ENCODE measurements at regions of chr5 and their contacts with region 1.

Region 1: GRCh38 chr5:146426853-146427618 is 20.1 kb upstream of the TCERG1 start:
- DNase-seq: peak in 1 of 2 experiments; percentile 42
- H3K4me3 ChIP-seq: no peak overlapping the region
- H3K4me3 Mint-ChIP-seq: no peak overlapping the region
- H3K27ac Mint-ChIP-seq: no peak overlapping the region
- H3K4me1 ChIP-seq: no peaks in the 10 kb centered on the region
- H3K4me1 Mint-ChIP-seq: peaks cover 6% of the 10 kb centered on the region
- H3K27me3 ChIP-seq: no peaks in the 10 kb centered on the region
- H3K27me3 Mint-ChIP-seq: peaks cover 8% of the 10 kb centered on the region
- CTCF ChIP-seq: peak; percentile 46 to 58

Region 2: DNA sequence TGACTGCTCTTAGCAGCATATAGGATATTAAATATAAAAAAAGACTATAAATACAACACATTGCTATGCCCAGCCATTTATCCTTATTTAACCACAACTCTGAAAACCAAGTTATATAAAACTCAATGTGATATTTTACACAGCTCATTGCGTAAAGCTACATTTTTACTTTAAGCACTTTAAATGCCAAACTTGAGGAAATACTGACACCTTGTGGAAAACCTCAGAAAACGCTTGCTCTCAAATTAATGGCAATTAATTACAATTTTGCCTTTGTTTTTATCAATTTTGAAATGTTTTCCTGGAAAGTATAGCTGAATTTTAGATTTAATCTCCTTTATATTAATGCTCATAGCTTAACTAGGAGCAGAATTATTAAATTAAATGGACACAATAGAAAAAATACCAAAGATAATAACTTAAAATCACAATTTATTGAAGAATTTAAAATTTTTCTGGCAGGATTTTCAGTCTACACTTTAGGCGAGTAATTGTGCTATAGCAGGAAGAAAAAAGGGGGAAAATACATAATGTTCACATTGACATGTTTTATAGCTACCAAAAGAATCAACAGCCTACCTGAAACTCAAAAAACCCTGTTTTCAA is 296.5 kb before region 1 on chr5:
- CTCF ChIA-PET with region 1: no interaction called
- POLR2A ChIA-PET with region 1: no interaction called
- intact Hi-C with region 1: loop called (anchors 10 kb)
- DNase-seq: peak in 1 of 2 experiments; percentile 12
- H3K4me3 ChIP-seq: no peak overlapping the region
- H3K4me3 Mint-ChIP-seq: no peak overlapping the region
- H3K27ac Mint-ChIP-seq: no peak overlapping the region
- H3K4me1 ChIP-seq: no peaks in the 10 kb centered on the region
- H3K4me1 Mint-ChIP-seq: no peaks in the 10 kb centered on the region
- H3K27me3 ChIP-seq: no peaks in the 10 kb centered on the region
- H3K27me3 Mint-ChIP-seq: no peaks in the 10 kb centered on the region
- CTCF ChIP-seq: peak; percentile 38 to 45

Region 3: DNA sequence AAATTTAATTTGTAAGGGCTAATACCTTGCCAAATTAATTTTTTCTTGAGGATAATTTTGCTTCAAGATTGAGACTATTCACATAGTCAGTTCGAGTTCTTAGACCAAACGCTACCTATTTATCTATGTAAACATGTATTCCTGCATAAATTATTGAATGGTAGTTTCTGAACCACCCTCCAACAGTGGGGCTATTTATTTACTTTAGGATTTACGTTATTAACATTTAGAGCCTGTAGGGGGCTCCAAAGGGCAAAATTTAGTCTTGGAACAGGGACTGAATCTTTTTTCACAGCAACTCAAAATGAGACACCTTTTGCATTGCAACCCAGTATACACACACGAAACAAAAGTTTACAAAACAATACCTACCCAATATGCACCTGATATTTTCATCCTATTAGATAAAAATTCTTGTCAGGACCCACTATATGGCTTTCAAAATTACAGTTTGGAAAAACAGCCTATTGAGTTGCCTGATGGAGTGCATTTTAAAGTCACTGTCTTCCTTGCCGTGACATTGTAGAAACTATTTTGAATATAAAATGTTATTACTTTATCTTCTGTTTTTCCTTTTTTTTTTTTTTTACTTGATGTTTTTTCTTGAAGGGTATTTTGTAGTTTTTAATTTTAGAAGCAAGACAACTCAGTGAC is 135.5 kb before region 1 on chr5:
- CTCF ChIA-PET with region 1: interaction called, 4 read pairs
- POLR2A ChIA-PET with region 1: no interaction called
- intact Hi-C with region 1: loop called (anchors 1 kb)
- DNase-seq: peak in 1 of 2 experiments; percentile 50
- H3K4me3 ChIP-seq: no peak overlapping the region
- H3K4me3 Mint-ChIP-seq: no peak overlapping the region
- H3K27ac Mint-ChIP-seq: no peak overlapping the region
- H3K4me1 ChIP-seq: no peaks in the 10 kb centered on the region
- H3K4me1 Mint-ChIP-seq: no peaks in the 10 kb centered on the region
- H3K27me3 ChIP-seq: no peaks in the 10 kb centered on the region
- H3K27me3 Mint-ChIP-seq: no peaks in the 10 kb centered on the region
- CTCF ChIP-seq: peak; percentile 69 to 72

Region 4: DNA sequence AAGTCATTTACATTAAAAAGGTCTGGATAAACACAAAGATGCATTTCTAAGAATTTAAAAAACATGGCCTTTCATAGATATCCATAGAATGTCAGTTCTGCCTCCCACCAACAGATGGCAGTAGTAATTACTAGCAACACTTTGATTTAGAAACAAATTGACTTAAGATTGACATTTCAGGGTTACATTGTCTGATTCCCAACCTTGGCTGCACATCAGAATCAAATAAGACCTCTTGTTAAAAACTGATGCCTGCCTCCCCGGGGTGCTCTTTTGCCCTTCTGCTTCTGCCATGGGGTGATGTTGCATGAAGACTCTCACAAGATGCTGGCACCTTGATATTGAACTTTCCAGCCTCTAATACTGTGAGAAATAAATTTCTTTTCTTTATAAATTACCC is 235.2 kb after region 1 on chr5:
- CTCF ChIA-PET with region 1: no interaction called
- POLR2A ChIA-PET with region 1: no interaction called
- intact Hi-C with region 1: no loop called
- DNase-seq: peak in 1 of 2 experiments; percentile 32
- H3K4me3 ChIP-seq: no peak overlapping the region
- H3K4me3 Mint-ChIP-seq: no peak overlapping the region
- H3K27ac Mint-ChIP-seq: no peak overlapping the region
- H3K4me1 ChIP-seq: no peaks in the 10 kb centered on the region
- H3K4me1 Mint-ChIP-seq: no peaks in the 10 kb centered on the region
- H3K27me3 ChIP-seq: no peaks in the 10 kb centered on the region
- H3K27me3 Mint-ChIP-seq: no peaks in the 10 kb centered on the region
- CTCF ChIP-seq: peak; percentile 60 to 66

Measured in Caco-2 (cell line).